ENCODE measurements at regions of chr7 and their contacts with region 1.

Region 1: GRCh38 chr7:8724080-8724718 is 290.8 kb downstream of the NXPH1 start:
- DNase-seq: peak; percentile 17 to 62 (median 30)
- ATAC-seq: peak in 3 of 4 donors; percentile 78 to 80 (median 78)
- H3K4me3 ChIP-seq: no peak overlapping the region
- H3K27ac ChIP-seq: no peak overlapping the region
- H3K4me1 ChIP-seq: no peaks in the 10 kb centered on the region
- H3K27me3 ChIP-seq: no peaks in the 10 kb centered on the region
- CTCF ChIP-seq: peak in 2 of 4 donors; percentile 35

Region 2: DNA sequence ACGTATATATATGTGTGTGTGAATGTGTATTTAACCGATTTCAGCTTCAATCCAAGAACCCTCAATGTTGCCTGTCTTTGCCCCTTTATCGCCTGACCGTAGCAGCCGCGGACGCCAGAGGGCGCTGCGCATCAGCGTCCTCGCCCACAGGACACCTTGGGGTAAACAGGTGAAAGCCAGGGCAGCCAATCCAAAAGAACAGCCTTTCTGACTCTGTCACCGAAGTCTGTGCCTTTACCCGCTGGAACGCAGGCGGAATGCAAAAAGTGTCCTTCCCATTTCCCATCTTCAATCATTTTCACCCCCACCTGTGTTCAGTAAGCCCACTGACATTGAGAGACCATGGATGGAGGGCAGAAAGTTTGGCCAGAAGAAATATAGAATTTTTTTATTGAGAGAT is 287.2 kb before region 1 on chr7:
- intact Hi-C with region 1: loop called in 1 of 3 experiments (anchors 10 kb)
- DNase-seq: peak; percentile 28 to 88 (median 62)
- ATAC-seq: peak in 3 of 4 donors; percentile 84 to 88 (median 87)
- H3K4me3 ChIP-seq: no peak overlapping the region
- H3K27ac ChIP-seq: no peak overlapping the region
- H3K4me1 ChIP-seq: peaks cover 3 to 7% (median 4%) of the 10 kb centered on the region in 3 donors
- H3K27me3 ChIP-seq: peaks cover 0 to 57% (median 18%) of the 10 kb centered on the region in 4 donors
- CTCF ChIP-seq: peak; percentile 52 to 68 (median 55)

Region 3: GRCh38 chr7:8465338-8465737 is 258.9 kb before region 1 on chr7:
- intact Hi-C with region 1: no loop called
- DNase-seq: no peak
- ATAC-seq: no peak
- H3K4me3 ChIP-seq: no peak overlapping the region
- H3K27ac ChIP-seq: no peak overlapping the region
- H3K4me1 ChIP-seq: no peaks in the 10 kb centered on the region
- H3K27me3 ChIP-seq: peaks cover 0 to 3% (median 0%) of the 10 kb centered on the region in 4 donors
- CTCF ChIP-seq: no peak